ENCODE measurements at regions of chr3 and their contacts with region 1.

Region 1: GRCh38 chr3:137612291-137612690 is 151.8 kb upstream of the SOX14 start:
- DNase-seq: no peak
- H3K4me3 ChIP-seq: no peak overlapping the region
- H3K27ac ChIP-seq: no peak overlapping the region
- H3K4me1 ChIP-seq: peaks cover 0 to 5% (median 2%) of the 10 kb centered on the region in 4 donors
- H3K27me3 ChIP-seq: no peaks in the 10 kb centered on the region
- CTCF ChIP-seq: no peak
- EP300 ChIP-seq: no peak
- POLR2A ChIP-seq: no peak

Region 2: GRCh38 chr3:137468446-137468845 is 143.8 kb before region 1 on chr3:
- intact Hi-C with region 1: loop called (anchors 10 kb)
- DNase-seq: no peak
- H3K4me3 ChIP-seq: no peak overlapping the region
- H3K27ac ChIP-seq: no peak overlapping the region
- H3K4me1 ChIP-seq: no peaks in the 10 kb centered on the region
- H3K27me3 ChIP-seq: no peaks in the 10 kb centered on the region
- CTCF ChIP-seq: no peak
- EP300 ChIP-seq: no peak
- POLR2A ChIP-seq: no peak

Region 3: DNA sequence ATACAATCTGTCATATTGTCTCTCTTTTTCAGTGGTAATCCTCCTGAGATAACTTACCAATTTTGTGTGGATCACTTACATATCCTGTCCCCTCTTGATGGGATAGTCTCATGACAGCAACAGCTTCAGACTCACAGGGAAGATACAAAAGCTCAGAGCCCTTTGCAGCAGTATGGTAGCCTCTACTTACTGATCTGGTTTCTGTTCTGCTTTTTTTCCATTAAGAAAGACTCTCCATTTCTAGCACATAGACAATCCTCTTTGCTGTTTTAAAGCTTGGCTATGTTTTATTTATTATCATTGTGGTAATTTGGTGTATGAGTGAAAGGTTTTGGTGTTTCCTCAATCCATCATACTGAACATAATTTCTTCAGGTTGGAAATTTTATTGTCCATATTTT is 126.4 kb after region 1 on chr3:
- intact Hi-C with region 1: no loop called
- DNase-seq: no peak
- H3K4me3 ChIP-seq: no peak overlapping the region
- H3K27ac ChIP-seq: no peak overlapping the region
- H3K4me1 ChIP-seq: no peaks in the 10 kb centered on the region
- H3K27me3 ChIP-seq: no peaks in the 10 kb centered on the region
- CTCF ChIP-seq: no peak
- EP300 ChIP-seq: no peak
- POLR2A ChIP-seq: no peak